HepG2 (cell line): ENCODE measurements at regions of chr16 and their contacts with region 1.

Region 1: DNA sequence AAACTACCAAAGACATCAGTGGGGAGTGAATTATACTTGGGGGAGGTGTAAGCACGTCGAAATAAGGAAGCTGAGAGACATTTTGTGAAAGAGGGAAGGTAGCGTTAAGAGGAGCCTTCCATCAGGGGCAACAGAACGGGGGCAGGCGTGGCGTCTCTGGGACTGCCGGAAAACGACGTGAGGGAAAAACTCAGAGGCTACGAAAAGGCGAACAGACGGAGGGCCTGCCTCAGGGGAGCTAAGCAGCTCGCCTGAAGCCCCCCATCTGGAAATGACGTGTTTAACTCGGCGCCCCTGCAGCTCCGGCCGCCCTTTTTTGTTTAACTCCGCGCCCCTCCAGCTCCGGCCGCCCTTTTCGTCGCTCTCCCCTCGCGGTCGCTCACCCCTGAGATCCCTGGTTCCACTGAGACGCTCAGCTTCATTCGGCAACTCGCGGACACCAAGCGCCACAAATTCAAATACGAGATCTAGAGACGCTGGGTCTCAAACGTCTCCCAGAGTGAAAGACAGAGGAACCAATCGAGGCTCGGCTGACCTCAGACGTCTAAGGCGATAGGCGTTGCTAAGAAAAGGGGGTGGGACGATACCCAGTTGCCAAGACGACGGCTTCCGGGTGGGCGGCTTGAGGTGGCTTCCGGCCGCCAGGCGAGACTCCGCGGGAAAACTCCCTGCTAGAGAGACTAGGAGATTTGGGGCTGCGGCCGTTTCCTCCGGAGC is 383.3 kb downstream of the ZFHX3 start:
- DNase-seq: peak; percentile 99
- ATAC-seq: peak; percentile 100
- H3K4me3 ChIP-seq: peak overlapping the region; percentile 77 to 93 (median 88)
- H3K27ac ChIP-seq: peak overlapping the region; percentile 75
- H3K4me1 ChIP-seq: peaks cover 23% of the 10 kb centered on the region
- H3K27me3 ChIP-seq: no peaks in the 10 kb centered on the region; a peak in 1 of 5 replicates
- CTCF ChIP-seq: no peak; the same call in 1 of the 2 replicates
- EP300 ChIP-seq: no peak
- POLR2A ChIP-seq: peak; percentile 57 to 91
- RAD21 ChIP-seq: no peak

Region 2: GRCh38 chr16:72554935-72555334 is 109.7 kb before region 1 on chr16:
- CTCF ChIA-PET with region 1: no interaction called
- POLR2A ChIA-PET with region 1: no interaction called
- in situ Hi-C with region 1: no loop called
- intact Hi-C with region 1: loop called (anchors 5 kb)
- DNase-seq: no peak
- ATAC-seq: no peak
- H3K4me3 ChIP-seq: no peak overlapping the region
- H3K27ac ChIP-seq: no peak overlapping the region
- H3K4me1 ChIP-seq: no peaks in the 10 kb centered on the region
- H3K27me3 ChIP-seq: no peaks in the 10 kb centered on the region
- CTCF ChIP-seq: no peak
- EP300 ChIP-seq: no peak
- POLR2A ChIP-seq: no peak
- RAD21 ChIP-seq: no peak

Region 3: GRCh38 chr16:72783716-72784318 is 119.2 kb after region 1 on chr16:
- CTCF ChIA-PET with region 1: no interaction called
- POLR2A ChIA-PET with region 1: no interaction called
- in situ Hi-C with region 1: no loop called
- intact Hi-C with region 1: loop called (anchors 5 kb)
- DNase-seq: peak; percentile 65
- ATAC-seq: peak; percentile 77
- H3K4me3 ChIP-seq: no peak overlapping the region
- H3K27ac ChIP-seq: no peak overlapping the region
- H3K4me1 ChIP-seq: peaks cover 10% of the 10 kb centered on the region
- H3K27me3 ChIP-seq: no peaks in the 10 kb centered on the region
- CTCF ChIP-seq: no peak
- EP300 ChIP-seq: no peak
- POLR2A ChIP-seq: no peak
- RAD21 ChIP-seq: no peak